ENCODE measurements at regions of chr16 and their contacts with region 1.

Region 1: GRCh38 chr16:66880288-66881013 is at the start of gene PDP2:
- DNase-seq: peak; percentile 98
- H3K4me3 Mint-ChIP-seq: peak within 1 kb of the TSS; percentile 93
- H3K27ac Mint-ChIP-seq: peak within 1 kb of the TSS; percentile 96
- H3K4me1 Mint-ChIP-seq: peaks cover 46% of the 10 kb centered on the region
- H3K27me3 Mint-ChIP-seq: no peaks in the 10 kb centered on the region
- total RNA-seq, gene PDP2: 48.0 and 51.8 TPM in 2 replicates

Region 2: GRCh38 chr16:66924527-66925321 is 44.3 kb after region 1 on chr16:
- intact Hi-C with region 1: loop called (anchors 5 kb)
- DNase-seq: peak; percentile 84
- H3K4me3 Mint-ChIP-seq: peak overlapping the region; percentile 75
- H3K27ac Mint-ChIP-seq: no peak overlapping the region
- H3K4me1 Mint-ChIP-seq: peaks cover 26% of the 10 kb centered on the region
- H3K27me3 Mint-ChIP-seq: peaks cover 38% of the 10 kb centered on the region

Measured in activated CD4-positive, alpha-beta T cell treated with anti-CD3 and anti-CD28 coated beads, Interleukin-2, amount 10 ng/mL, durations not matched to agents 24 days and 14 days (primary cell).